Spleen (tissue), 13 donors: ENCODE measurements at regions of chr4 and their contacts with region 1.

Region 1: DNA sequence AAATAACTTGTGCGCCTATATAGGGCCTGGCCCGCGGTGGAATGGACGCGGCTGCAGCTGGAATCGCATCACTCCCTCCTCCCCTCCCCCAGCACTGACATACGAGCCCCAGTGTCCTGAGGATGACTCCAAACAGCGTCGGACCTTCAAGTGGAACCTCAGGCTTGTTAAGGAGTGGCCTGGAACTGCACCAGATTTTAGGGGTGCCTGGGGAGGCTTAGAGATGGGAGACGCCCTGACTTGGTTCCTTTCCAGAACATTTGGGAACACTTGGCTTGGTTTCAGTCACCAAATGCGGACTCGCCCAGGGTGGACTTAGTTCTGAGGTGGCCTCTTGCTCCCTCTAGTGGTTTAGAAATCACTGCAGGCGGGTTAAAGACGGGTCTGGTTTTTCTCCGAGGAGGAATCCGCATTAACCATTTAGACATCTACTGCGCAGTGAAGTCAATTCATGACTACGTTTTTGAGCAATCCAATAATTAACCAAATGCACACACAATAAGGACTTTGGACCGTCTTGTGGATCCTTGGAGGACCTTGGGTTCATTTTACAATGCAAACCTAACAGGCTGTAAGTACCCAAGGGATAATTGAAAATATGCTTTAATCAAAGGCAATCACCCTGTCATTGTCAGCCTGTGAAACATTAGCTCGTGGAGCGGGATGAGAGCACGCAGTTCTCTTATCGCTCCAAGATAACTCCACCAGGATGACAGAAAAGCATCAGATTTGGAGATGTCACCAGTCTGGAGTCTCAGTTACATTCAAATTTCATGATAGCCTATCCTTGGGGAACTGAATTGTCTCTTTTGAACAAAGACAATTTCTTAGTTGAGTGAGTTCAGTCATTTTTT is 11.2 kb upstream of the PDGFRA start:
- DNase-seq: peak; percentile 79
- H3K4me3 ChIP-seq: peak overlapping the region in 3 of 8 donors; percentile 14 to 62 (median 19)
- H3K27ac ChIP-seq: peak overlapping the region in 1 of 8 donors; percentile 24
- H3K4me1 ChIP-seq: peaks cover 0 to 10% (median 8%) of the 10 kb centered on the region in 6 donors
- H3K27me3 ChIP-seq: peaks cover 0 to 42% (median 8%) of the 10 kb centered on the region in 7 donors
- CTCF ChIP-seq: peak; percentile 74 to 91 (median 85)
- POLR2A ChIP-seq: no peak

Region 2: DNA sequence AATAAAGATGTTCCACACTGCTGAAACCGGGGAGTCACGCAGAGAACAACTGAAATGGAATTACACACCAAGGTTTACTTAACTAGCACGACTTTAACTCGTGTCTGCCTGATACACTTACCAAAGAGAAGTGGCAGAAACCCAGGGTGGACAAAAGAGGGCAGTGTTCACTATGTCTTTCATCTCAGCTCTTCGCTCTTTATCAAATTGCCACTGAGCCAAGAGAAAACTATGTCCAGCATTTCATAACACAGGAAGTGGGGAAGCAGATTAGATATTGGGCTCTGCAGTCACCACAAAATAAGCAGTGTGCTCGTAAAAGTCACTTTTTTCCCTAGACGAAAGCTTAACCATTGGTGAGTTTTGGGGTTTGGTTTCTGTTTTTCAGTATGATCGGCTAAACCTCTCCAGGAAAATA is 309.2 kb before region 1 on chr4:
- intact Hi-C with region 1: loop called (anchors 5 kb)
- DNase-seq: no peak
- H3K4me3 ChIP-seq: peak overlapping the region in 2 of 8 donors; percentile 1 to 27
- H3K27ac ChIP-seq: peak overlapping the region in 3 of 8 donors; percentile 17 to 54 (median 22)
- H3K4me1 ChIP-seq: peaks cover 3 to 43% (median 18%) of the 10 kb centered on the region in 6 donors
- H3K27me3 ChIP-seq: peaks cover 0 to 47% (median 9%) of the 10 kb centered on the region in 7 donors
- CTCF ChIP-seq: peak in 10 of 11 experiments; percentile 18 to 76 (median 60)
- POLR2A ChIP-seq: no peak

Region 3: GRCh38 chr4:53929955-53930798 is 287.7 kb before region 1 on chr4:
- intact Hi-C with region 1: loop called (anchors 5 kb)
- DNase-seq: no peak
- H3K4me3 ChIP-seq: no peak overlapping the region
- H3K27ac ChIP-seq: peak overlapping the region in 1 of 8 donors; percentile 24
- H3K4me1 ChIP-seq: peaks cover 0 to 20% (median 3%) of the 10 kb centered on the region in 6 donors
- H3K27me3 ChIP-seq: peaks cover 0 to 7% (median 0%) of the 10 kb centered on the region in 7 donors
- CTCF ChIP-seq: peak; percentile 55 to 89 (median 79)
- POLR2A ChIP-seq: no peak

Region 4: GRCh38 chr4:54091637-54092404 is 126.0 kb before region 1 on chr4:
- intact Hi-C with region 1: no loop called
- DNase-seq: peak; percentile 93
- H3K4me3 ChIP-seq: peak overlapping the region; percentile 33 to 69 (median 48)
- H3K27ac ChIP-seq: no peak overlapping the region
- H3K4me1 ChIP-seq: peaks cover 15 to 33% (median 30%) of the 10 kb centered on the region in 6 donors
- H3K27me3 ChIP-seq: peaks cover 6 to 75% (median 61%) of the 10 kb centered on the region in 7 donors
- CTCF ChIP-seq: no peak
- POLR2A ChIP-seq: no peak